ENCODE measurements at regions of chr3 and their contacts with region 1.

Region 1: DNA sequence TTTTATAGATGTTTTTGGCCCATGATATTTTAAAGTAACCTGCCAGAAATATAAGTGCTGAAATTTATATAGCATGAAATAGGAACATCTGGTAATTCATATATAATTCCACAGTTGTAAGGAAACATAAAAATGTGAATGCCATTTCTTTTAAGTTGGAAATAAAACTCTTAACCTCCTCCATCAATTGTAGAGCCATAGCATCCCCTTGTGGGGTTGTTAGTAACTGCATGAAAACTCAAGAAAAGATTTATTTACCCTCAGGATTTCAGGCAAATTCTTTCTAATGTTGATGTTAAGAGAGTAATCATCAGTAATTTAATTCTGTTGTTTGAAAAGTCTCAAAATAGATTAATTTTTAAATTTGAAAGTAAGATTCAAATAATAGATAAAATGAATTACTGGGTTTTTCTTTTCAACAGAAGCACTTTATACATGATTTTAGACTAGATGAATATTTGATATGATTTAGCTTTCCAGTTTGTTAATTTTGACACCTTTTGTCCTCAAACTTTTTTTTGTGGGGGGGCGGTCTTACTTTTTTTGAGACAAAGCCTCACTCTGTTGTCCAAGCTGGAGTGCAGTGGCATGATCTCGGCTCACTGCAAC is 74.7 kb downstream of the RASA2 start:
- DNase-seq: peak; percentile 40
- ATAC-seq: no peak
- H3K4me3 Mint-ChIP-seq: no peak overlapping the region
- H3K27ac Mint-ChIP-seq: no peak overlapping the region
- H3K4me1 Mint-ChIP-seq: peaks cover 34% of the 10 kb centered on the region
- H3K27me3 Mint-ChIP-seq: no peaks in the 10 kb centered on the region

Region 2: DNA sequence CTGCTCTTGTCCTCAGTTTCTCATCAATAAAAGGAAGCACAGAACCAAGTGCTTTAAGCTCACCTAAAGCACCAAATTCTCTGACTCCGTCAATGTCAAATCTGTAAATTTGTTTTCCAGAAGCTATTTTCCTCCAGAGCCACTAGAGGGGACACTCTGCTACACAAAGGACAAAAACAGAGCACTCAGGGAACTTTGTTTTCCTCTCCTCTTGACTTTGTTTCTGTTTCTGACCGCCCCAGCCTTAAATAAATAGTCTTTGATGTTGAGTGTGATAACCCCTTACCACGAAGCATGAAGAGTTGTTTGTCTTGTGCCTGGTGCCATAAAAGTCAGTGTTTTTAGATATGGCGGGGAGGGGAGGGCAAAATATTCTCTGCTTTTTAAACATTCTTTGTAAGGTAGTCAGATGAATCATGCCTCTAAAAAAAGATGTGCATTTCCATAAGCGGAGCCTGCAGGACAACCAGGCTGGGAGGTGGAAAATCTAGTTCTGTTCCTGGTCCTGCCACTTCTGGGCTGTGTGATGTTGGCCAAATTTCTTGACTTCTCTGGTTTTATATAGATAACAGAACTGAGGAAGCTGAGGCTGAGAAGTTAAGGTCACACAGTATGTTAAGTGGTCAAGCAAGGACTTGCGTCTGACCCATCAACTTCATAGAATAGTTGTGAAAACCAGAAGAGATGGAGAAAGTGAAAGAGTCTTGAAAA is 200.5 kb before region 1 on chr3:
- CTCF ChIA-PET with region 1: interaction called, 15 read pairs
- POLR2A ChIA-PET with region 1: no interaction called
- intact Hi-C with region 1: loop called in 1 of 2 experiments (anchors 2 kb)
- DNase-seq: no peak
- ATAC-seq: peak; percentile 87
- H3K4me3 Mint-ChIP-seq: peak overlapping the region; percentile 20
- H3K27ac Mint-ChIP-seq: peak overlapping the region; percentile 55
- H3K4me1 Mint-ChIP-seq: peaks cover 9% of the 10 kb centered on the region
- H3K27me3 Mint-ChIP-seq: no peaks in the 10 kb centered on the region

Region 3: DNA sequence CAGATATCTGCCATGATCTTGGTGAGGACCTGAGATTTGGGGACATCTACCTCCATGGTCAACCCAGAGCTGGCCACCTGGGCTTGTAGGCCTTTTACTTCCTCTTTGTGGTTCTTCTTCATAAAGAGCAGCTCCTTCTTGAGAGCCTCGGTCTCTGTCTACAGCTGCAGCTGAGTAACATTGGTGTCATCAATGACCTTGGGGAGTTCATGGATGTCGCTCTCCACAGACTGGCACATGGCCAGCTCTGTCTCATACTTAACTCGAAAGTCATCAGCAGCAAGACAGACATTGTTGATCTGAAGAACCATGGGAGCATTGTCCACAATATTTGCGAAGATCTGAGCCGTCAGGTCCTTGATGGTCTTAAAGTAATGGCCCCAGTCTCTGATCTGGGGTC is 90.4 kb before region 1 on chr3:
- CTCF ChIA-PET with region 1: interaction called, 73 read pairs
- POLR2A ChIA-PET with region 1: no interaction called
- intact Hi-C with region 1: loop called (anchors 1 kb)
- DNase-seq: no peak
- ATAC-seq: no peak
- H3K4me3 Mint-ChIP-seq: no peak overlapping the region
- H3K27ac Mint-ChIP-seq: no peak overlapping the region
- H3K4me1 Mint-ChIP-seq: peaks cover 11% of the 10 kb centered on the region
- H3K27me3 Mint-ChIP-seq: no peaks in the 10 kb centered on the region

Region 4: GRCh38 chr3:141493184-141493583 is 68.3 kb before region 1 on chr3:
- CTCF ChIA-PET with region 1: interaction called, 28 read pairs
- POLR2A ChIA-PET with region 1: interaction called, 5 read pairs
- intact Hi-C with region 1: loop called in 1 of 2 experiments (anchors 1 kb)
- DNase-seq: no peak
- ATAC-seq: peak; percentile 80
- H3K4me3 Mint-ChIP-seq: no peak overlapping the region
- H3K27ac Mint-ChIP-seq: peak overlapping the region; percentile 43
- H3K4me1 Mint-ChIP-seq: peaks cover 91% of the 10 kb centered on the region
- H3K27me3 Mint-ChIP-seq: no peaks in the 10 kb centered on the region

Region 5: GRCh38 chr3:141523615-141524375 is 37.7 kb before region 1 on chr3:
- CTCF ChIA-PET with region 1: interaction called, 10 read pairs
- POLR2A ChIA-PET with region 1: no interaction called
- intact Hi-C with region 1: no loop called
- DNase-seq: no peak
- ATAC-seq: peak; percentile 54
- H3K4me3 Mint-ChIP-seq: no peak overlapping the region
- H3K27ac Mint-ChIP-seq: no peak overlapping the region
- H3K4me1 Mint-ChIP-seq: peaks cover 82% of the 10 kb centered on the region
- H3K27me3 Mint-ChIP-seq: no peaks in the 10 kb centered on the region

Region 6: DNA sequence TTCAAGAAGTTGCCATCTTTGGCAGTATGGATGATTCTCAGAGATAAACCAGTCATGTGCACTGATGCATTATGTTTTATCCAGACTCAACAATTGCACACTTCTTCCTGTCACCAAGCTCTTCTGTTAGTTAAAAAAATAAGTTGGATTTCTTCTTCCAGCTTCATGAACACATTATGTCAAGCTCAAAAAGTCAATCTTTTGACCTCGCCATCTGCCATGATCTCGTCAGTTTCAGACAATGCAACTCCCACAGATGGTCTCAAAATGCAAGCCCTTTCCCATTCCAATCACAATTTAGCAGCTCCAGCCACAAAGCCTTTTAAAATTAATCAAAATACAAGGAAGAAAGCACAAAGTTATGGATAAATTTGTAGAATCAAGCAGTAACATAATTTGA is 545.0 kb after region 1 on chr3:
- CTCF ChIA-PET with region 1: no interaction called
- POLR2A ChIA-PET with region 1: no interaction called
- intact Hi-C with region 1: no loop called
- DNase-seq: no peak
- ATAC-seq: no peak
- H3K4me3 Mint-ChIP-seq: no peak overlapping the region
- H3K27ac Mint-ChIP-seq: no peak overlapping the region
- H3K4me1 Mint-ChIP-seq: peaks cover 4% of the 10 kb centered on the region
- H3K27me3 Mint-ChIP-seq: no peaks in the 10 kb centered on the region

Measured in activated CD4-positive, alpha-beta T cell treated with anti-CD3 and anti-CD28 coated beads for 36 hours (primary cell).